ENCODE measurements at regions of chr6 and their contacts with region 1.

Region 1: GRCh38 chr6:70884074-70884983 is 72.5 kb downstream of the B3GAT2 start:
- DNase-seq: peak; percentile 80
- CTCF ChIP-seq: peak; percentile 90

Region 2: DNA sequence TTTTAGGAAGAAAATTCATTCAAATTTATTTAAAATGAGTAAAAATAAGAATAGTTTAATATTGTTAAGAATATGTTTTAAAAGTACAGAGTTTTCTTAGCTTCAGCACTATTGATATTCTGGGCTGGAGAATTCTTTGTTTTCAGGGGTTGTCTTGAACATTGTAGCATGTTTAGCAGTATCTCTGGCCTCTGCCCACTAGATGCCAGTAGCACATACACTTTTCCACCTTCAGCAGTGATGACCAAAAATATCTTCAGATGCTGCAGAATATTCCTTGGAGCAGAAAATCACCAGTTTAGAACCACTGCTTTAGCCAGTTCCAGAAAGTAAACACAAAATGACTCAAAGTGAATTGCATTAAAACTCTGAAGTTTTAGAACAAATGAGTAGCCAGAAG is 337.0 kb before region 1 on chr6:
- CTCF ChIA-PET with region 1: interaction called, 11 read pairs
- POLR2A ChIA-PET with region 1: no interaction called
- DNase-seq: no peak
- CTCF ChIP-seq: peak; percentile 14

Region 3: GRCh38 chr6:70706491-70707123 is 177.7 kb before region 1 on chr6:
- CTCF ChIA-PET with region 1: interaction called, 114 read pairs
- POLR2A ChIA-PET with region 1: interaction called, 3 read pairs
- DNase-seq: no peak
- CTCF ChIP-seq: peak; percentile 38

Region 4: DNA sequence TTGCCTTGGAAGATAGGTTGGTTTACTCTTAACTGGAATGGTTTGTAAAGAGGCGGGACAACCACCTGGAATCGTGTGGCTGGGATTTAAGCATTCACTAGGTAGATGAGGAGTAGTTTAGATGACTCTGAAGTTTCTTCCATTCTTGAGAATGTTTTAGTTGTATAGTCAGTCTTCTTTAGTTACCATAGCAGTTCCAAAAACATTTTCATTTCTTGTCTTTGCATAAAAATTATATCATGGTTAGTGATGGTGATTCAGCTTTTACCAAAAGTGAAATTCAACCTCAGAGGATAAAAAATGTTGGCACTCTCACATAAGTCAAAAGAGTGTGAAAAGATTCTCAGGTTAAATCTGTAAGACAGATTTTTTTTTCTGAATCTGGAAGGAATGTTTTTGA is 146.3 kb before region 1 on chr6:
- CTCF ChIA-PET with region 1: no interaction called
- POLR2A ChIA-PET with region 1: no interaction called
- DNase-seq: no peak
- CTCF ChIP-seq: no peak

Region 5: GRCh38 chr6:70901326-70901725 is 17.0 kb after region 1 on chr6:
- CTCF ChIA-PET with region 1: interaction called, 14 read pairs
- POLR2A ChIA-PET with region 1: no interaction called
- DNase-seq: no peak
- CTCF ChIP-seq: no peak

Region 6: DNA sequence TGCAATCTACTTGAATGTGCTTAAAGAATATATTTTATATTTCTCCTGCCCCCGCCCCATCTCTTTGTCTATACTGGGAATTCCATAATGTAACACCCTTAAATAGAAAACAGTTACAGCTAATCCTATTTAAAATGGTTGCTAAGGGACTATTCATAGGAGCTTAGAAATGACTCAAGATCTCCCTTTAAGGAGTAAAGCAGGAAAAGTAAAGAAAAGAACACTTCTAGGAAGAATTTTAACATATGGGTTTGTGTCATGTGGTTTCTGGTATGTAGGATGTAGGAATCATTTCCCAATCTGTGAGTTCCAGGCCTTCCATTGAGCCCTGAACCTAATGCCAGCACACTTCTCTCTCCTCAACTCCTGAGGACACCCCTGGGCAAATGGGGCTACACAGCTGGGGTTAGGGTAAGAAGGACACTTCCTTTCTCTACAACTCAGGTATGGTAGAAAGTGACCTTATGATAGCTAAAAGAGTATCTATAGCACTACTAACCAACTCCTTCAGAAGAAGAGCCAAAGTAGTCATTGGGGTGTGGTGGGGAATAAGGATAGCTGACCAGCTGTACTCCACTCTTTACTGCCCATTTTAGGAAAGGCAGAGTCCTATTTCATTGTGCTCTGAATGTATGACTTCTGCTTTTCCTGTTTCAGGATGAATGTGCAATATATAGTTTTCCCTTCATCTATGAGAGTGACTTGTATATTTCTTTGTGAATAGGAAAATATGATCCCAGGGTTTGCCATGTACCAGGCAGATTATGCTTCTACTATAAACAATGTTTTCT is 1029.3 kb after region 1 on chr6:
- CTCF ChIA-PET with region 1: no interaction called
- POLR2A ChIA-PET with region 1: no interaction called
- DNase-seq: no peak
- CTCF ChIP-seq: no peak

Region 7: DNA sequence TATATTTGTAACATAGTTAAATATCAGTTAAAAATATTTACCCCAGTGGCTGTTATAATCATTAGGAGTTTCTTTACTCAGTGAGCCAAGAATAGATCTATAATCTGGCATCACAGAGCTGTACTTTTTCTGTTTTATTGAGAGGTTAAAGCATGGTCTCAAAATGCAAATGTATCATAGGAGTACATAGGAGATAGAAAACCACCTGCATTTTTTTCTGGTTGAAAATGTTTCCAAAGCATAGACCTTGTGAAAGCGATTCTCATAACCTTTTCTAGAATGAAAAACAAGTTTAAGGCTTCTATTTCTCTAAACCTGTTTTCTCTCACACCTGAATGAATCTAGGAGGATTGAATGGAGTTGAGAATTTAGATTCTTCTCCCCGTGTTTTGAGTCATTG is 1751.9 kb after region 1 on chr6:
- CTCF ChIA-PET with region 1: no interaction called
- POLR2A ChIA-PET with region 1: no interaction called
- DNase-seq: peak; percentile 17
- CTCF ChIP-seq: no peak